Transverse colon (tissue), 4 donors: ENCODE measurements at regions of chr21 and their contacts with region 1.

Region 1: DNA sequence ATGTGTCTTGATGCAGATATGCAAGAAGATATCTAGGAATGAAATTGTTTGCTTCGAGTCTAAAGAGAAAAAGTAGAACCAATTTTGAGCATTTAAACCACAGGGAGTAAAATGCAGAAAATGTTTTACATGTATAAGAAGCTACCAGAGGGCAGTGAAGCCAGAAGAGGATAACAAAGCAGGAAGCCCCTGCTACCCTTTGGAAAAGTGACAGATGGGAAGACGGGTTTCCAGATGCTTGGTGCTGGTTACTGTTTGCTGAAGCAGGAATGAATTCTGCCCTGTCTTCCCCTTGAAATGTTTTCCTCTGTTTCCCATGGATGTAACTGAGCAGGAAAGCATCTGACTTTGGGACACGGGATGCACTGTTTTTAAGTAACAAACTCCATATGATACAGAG is 822.2 kb downstream of the MRPL39 start:
- DNase-seq: no peak
- H3K4me3 ChIP-seq: no peak overlapping the region
- H3K27ac ChIP-seq: no peak overlapping the region
- H3K4me1 ChIP-seq: no peaks in the 10 kb centered on the region
- H3K27me3 ChIP-seq: no peaks in the 10 kb centered on the region
- CTCF ChIP-seq: no peak
- EP300 ChIP-seq: no peak
- POLR2A ChIP-seq: no peak

Region 2: DNA sequence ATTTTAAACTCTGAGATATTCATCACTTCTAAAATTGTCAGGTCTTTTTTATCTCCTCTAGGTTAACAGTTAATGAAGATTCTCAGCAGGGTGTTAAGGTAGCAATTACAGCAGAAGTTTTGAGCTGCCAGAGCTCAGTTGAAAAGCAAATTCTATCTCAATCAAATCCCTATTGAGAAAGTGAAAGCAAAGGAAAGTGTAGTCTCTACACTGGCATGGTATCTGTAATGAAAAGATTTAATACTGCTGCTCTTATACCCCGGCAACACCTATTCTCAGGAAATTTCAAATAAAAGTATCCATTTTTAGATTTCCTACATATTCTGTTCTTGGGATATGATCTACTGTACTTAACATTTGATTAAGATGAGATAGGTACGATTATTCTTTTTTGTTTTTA is 91.3 kb before region 1 on chr21:
- in situ Hi-C with region 1: loop called in 1 of 4 experiments (anchors 25 kb)
- intact Hi-C with region 1: no loop called
- DNase-seq: no peak
- H3K4me3 ChIP-seq: no peak overlapping the region
- H3K27ac ChIP-seq: no peak overlapping the region
- H3K4me1 ChIP-seq: no peaks in the 10 kb centered on the region
- H3K27me3 ChIP-seq: no peaks in the 10 kb centered on the region
- CTCF ChIP-seq: no peak
- EP300 ChIP-seq: no peak
- POLR2A ChIP-seq: no peak